H1 (cell line): ENCODE measurements at regions of chr1 and their contacts with region 1.

Region 1: GRCh38 chr1:202852163-202852904 is 36.6 kb downstream of the RABIF start:
- DNase-seq: peak; percentile 62 to 70
- H3K4me3 ChIP-seq: no peak overlapping the region
- H3K27ac ChIP-seq: no peak overlapping the region
- H3K4me1 ChIP-seq: no peaks in the 10 kb centered on the region
- H3K27me3 ChIP-seq: no peaks in the 10 kb centered on the region
- CTCF ChIP-seq: peak; percentile 81 to 90 (median 83)
- EP300 ChIP-seq: no peak
- POLR2A ChIP-seq: no peak
- RAD21 ChIP-seq: peak; percentile 84 to 87

Region 2: DNA sequence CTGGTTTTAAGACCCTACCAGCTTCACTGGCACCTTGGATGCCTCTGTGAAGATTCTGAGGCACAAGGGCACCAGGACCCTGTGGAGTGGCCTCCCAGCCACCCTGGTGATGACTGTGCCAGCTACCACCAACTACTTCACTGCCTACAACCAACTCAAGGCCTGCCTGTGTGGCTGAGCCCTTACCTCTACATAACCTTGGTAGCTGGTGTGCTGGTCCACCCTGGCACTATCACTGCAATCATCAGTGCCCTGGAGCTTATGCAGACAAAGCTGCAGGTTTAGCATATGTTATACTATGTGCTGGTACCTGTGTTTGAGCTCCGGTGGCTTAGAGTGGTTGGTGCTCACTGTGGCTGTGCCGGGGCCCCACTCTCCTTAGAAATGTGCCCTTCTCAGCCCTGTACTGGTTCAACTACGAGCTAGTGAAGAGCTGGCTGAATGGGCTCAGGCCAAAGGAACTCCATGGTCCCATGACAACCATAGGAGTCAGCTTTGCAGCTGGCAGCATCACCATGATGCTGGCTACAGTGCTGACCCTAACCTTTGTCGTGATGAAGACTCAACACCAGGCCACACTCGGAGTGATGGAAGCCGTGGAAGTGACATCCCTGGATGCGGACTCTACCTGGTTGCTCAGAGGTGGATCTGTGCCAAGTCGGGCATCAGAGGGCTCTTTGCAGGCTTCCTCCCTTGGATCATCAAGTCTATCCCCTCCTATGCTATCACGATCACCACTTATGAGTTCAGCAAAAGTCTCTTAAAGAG is 55.8 kb before region 1 on chr1:
- CTCF ChIA-PET with region 1: interaction called, 10 read pairs
- POLR2A ChIA-PET with region 1: interaction called, 4 read pairs
- DNase-seq: peak in 1 of 2 experiments; percentile 41
- H3K4me3 ChIP-seq: no peak overlapping the region
- H3K27ac ChIP-seq: no peak overlapping the region
- H3K4me1 ChIP-seq: peaks cover 0 to 5% (median 3%) of the 10 kb centered on the region in 4 experiments; a peak in 5 of 7 replicates
- H3K27me3 ChIP-seq: no peaks in the 10 kb centered on the region
- CTCF ChIP-seq: no peak
- EP300 ChIP-seq: no peak
- POLR2A ChIP-seq: no peak
- RAD21 ChIP-seq: no peak

Region 3: DNA sequence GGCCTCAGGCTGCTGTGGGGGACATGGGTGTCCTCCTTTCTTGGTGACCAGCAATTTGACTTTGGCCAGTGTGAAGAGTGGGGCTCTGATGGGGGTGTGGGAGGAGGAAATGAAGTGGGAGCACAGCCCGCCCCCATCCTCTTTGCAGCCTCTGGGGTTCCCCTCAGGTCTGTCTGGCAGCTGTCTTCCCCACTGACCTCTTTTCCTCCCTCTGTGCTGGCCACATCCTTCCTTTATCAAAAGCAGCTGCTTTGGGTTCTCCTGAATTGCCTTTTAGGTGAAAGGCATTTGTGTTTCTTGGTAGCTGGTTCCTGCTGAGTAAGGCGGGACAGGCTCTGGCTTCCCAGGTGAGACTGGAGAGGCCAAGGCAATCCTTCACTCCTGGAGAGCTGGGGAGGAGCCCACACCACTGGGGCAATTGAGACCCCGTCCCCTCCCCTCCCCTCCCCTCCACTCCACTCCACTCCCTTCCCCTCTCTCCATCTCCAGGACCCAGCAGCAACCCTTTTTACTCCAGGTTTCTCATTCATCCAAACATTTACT is 16.7 kb before region 1 on chr1:
- CTCF ChIA-PET with region 1: interaction called, 24 read pairs
- POLR2A ChIA-PET with region 1: interaction called, 9 read pairs
- DNase-seq: no peak
- H3K4me3 ChIP-seq: no peak overlapping the region
- H3K27ac ChIP-seq: no peak overlapping the region
- H3K4me1 ChIP-seq: peaks cover 0 to 6% (median 5%) of the 10 kb centered on the region in 4 experiments; a peak in 6 of 7 replicates
- H3K27me3 ChIP-seq: no peaks in the 10 kb centered on the region
- CTCF ChIP-seq: no peak
- EP300 ChIP-seq: no peak
- POLR2A ChIP-seq: no peak
- RAD21 ChIP-seq: no peak